GM10248 (cell line): ENCODE measurements at regions of chr13 and their contacts with region 1.

Region 1: DNA sequence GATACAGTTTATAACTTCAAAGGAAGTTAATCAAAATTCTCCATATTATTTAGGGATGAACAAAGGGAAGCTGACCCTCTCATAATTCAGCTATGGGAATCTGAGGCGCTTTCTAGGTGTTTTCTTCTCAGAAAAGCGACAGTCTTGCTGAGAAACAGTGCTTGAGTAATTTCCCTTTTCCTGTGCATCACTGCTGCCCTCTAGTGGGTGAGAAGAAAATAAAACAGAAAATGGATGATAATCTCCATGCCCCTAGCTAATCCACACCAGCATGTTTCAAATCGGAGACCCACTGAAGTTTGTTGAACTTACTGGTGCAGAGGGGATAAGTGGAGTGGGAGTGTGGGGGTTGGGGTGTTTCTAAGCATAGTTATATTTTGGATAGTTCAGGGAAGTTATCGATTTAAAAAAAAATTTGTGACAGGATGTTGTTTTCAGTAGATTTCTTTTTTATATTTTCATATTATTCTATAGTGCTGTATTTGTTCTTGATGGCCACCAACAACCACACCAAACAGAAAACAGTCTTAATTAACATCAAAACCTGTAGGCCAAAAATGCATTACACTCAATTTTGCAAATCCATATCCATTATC is 21.4 kb downstream of the LCP1 start:
- DNase-seq: peak; percentile 58
- CTCF ChIP-seq: peak; percentile 82

Region 2: GRCh38 chr13:46126552-46127357 is 33.8 kb before region 1 on chr13:
- CTCF ChIA-PET with region 1: interaction called, 13 read pairs
- POLR2A ChIA-PET with region 1: no interaction called
- DNase-seq: peak; percentile 58
- CTCF ChIP-seq: peak; percentile 88

Region 3: GRCh38 chr13:46134961-46135522 is 25.5 kb before region 1 on chr13:
- CTCF ChIA-PET with region 1: interaction called, 59 read pairs
- POLR2A ChIA-PET with region 1: no interaction called
- DNase-seq: no peak
- CTCF ChIP-seq: no peak

Region 4: DNA sequence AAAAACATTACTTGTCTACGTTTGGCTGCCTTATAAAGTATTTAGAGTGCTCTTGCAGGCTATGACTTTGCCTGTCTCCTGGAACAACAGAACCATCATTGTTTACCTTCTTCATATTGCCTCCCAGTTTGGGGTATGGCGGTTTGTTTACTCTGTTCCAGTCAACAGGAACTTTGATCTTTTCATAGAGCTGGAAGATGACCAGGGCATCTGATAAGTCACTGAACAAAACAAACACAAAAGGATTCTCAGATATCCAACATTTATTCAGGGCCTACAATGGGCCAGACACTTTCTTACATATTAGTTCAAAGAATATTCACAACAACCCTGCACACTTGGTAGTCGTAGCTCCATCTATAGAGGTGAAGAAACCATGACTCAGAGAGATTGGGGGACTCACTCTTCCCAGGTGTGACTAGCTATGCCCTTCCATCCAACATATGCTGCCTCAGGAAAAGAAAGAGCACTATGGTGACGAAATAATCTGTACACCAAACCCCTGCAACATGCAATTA is 17.3 kb before region 1 on chr13:
- CTCF ChIA-PET with region 1: interaction called, 63 read pairs
- POLR2A ChIA-PET with region 1: no interaction called
- DNase-seq: no peak
- CTCF ChIP-seq: no peak

Region 5: DNA sequence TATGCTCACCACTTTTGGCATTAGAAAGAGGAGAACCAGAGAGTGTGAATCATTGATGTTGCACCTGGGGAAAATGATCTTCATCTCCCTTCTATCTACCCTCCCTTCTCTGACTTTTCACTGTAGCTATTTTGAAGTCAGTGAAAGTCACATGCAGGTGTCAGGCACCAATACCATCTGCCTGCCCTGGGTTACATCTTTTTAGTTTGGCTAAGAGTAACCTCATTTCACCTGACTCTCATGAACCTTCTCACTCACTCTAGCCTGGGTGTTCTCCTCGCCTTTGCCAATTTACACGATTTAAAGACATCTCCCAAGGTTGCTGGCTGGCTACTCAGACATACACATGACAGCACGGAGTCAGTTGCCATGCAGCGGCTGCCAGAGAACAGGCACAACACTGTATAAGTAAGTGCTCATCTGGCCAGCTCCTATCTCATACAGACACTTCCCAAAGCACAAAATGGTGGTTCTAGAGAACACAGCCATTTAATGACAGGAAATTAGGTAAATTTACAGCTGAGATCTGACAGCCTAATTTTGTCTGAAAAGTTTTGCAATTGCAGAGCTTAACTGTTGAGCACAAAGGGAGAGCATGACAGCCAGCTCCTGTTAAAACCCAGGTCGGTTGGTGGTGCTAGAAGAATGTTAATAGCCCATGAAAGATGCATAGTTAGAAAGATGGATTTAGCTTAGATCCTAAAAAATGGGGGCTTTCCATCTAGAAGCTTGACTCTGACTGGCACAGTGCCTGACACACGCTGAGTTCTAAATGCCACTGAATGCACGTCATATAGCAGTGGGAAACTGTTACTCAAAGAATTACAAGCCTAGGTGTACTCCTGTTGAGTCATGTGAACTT is 11.1 kb before region 1 on chr13:
- CTCF ChIA-PET with region 1: interaction called, 63 read pairs
- POLR2A ChIA-PET with region 1: no interaction called
- DNase-seq: no peak
- CTCF ChIP-seq: no peak

Region 6: GRCh38 chr13:46181840-46182490 is 21.4 kb after region 1 on chr13 and contains the start of gene LCP1:
- CTCF ChIA-PET with region 1: interaction called, 100 read pairs
- POLR2A ChIA-PET with region 1: no interaction called
- DNase-seq: peak; percentile 75
- CTCF ChIP-seq: no peak